Activated CD4-positive, alpha-beta T cell treated with anti-CD3 and anti-CD28 coated beads, Interleukin-2, amount 10 ng/mL, durations not matched to agents 24 days and 14 days (primary cell): ENCODE measurements at regions of chr2 and their contacts with region 1.

Region 1: DNA sequence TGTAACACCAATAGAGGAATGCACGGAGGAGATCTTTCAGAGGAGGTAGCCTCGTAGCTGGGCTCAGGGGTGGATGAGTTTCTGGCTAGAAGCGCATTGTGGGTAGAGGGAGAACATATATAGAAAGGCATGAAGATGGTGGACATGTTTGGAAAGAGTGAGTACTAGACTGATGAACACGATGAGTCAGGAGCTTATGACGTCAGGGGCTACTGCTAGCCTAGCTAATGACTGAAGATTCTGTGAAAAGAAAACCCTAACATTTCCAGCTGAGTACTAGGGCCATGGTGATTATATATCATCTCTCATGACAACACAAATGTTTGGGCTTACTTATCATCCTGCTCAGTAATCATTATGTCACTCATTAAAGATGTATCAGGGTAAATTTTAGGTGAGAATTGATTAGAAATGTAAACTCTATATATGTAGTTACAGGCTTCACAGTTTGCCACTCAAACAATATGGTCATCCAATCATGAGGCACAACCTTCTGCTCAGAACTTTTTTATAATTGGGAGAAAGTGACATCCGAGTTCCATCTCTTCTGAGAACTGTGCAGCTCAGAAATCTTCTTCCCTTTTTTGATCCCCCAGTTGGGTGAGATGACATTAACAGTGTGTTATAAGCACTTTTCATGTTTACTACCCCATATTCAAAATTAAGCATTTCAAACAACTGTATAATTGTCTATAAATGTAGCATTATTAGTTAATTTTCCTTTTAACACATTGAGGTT is 22.2 kb upstream of the IL1RN start:
- DNase-seq: peak; percentile 69
- H3K4me3 Mint-ChIP-seq: no peak overlapping the region
- H3K27ac Mint-ChIP-seq: peak overlapping the region; percentile 96
- H3K4me1 Mint-ChIP-seq: peaks cover 45% of the 10 kb centered on the region
- H3K27me3 Mint-ChIP-seq: peaks cover 3% of the 10 kb centered on the region

Region 2: GRCh38 chr2:112811841-112812306 is 293.3 kb before region 1 on chr2:
- intact Hi-C with region 1: no loop called
- DNase-seq: no peak
- H3K4me3 Mint-ChIP-seq: peak overlapping the region; percentile 27
- H3K27ac Mint-ChIP-seq: peak overlapping the region; percentile 60
- H3K4me1 Mint-ChIP-seq: peaks cover 28% of the 10 kb centered on the region
- H3K27me3 Mint-ChIP-seq: no peaks in the 10 kb centered on the region

Region 3: GRCh38 chr2:112916145-112916571 is 189.1 kb before region 1 on chr2:
- intact Hi-C with region 1: loop called (anchors 5 kb)
- DNase-seq: peak; percentile 62
- H3K4me3 Mint-ChIP-seq: peak overlapping the region; percentile 58
- H3K27ac Mint-ChIP-seq: peak overlapping the region; percentile 85
- H3K4me1 Mint-ChIP-seq: peaks cover 32% of the 10 kb centered on the region
- H3K27me3 Mint-ChIP-seq: no peaks in the 10 kb centered on the region

Region 4: GRCh38 chr2:113080134-113080533 is 25.1 kb before region 1 on chr2:
- intact Hi-C with region 1: loop called (anchors 1 kb)
- DNase-seq: peak; percentile 88
- H3K4me3 Mint-ChIP-seq: no peak overlapping the region
- H3K27ac Mint-ChIP-seq: no peak overlapping the region
- H3K4me1 Mint-ChIP-seq: peaks cover 29% of the 10 kb centered on the region
- H3K27me3 Mint-ChIP-seq: peaks cover 15% of the 10 kb centered on the region

Region 5: GRCh38 chr2:113116100-113116958 is 11.1 kb after region 1 on chr2:
- intact Hi-C with region 1: loop called (anchors 1 kb)
- DNase-seq: peak; percentile 71
- H3K4me3 Mint-ChIP-seq: peak overlapping the region; percentile 36
- H3K27ac Mint-ChIP-seq: peak overlapping the region; percentile 71
- H3K4me1 Mint-ChIP-seq: peaks cover 20% of the 10 kb centered on the region
- H3K27me3 Mint-ChIP-seq: peaks cover 2% of the 10 kb centered on the region

Region 6: DNA sequence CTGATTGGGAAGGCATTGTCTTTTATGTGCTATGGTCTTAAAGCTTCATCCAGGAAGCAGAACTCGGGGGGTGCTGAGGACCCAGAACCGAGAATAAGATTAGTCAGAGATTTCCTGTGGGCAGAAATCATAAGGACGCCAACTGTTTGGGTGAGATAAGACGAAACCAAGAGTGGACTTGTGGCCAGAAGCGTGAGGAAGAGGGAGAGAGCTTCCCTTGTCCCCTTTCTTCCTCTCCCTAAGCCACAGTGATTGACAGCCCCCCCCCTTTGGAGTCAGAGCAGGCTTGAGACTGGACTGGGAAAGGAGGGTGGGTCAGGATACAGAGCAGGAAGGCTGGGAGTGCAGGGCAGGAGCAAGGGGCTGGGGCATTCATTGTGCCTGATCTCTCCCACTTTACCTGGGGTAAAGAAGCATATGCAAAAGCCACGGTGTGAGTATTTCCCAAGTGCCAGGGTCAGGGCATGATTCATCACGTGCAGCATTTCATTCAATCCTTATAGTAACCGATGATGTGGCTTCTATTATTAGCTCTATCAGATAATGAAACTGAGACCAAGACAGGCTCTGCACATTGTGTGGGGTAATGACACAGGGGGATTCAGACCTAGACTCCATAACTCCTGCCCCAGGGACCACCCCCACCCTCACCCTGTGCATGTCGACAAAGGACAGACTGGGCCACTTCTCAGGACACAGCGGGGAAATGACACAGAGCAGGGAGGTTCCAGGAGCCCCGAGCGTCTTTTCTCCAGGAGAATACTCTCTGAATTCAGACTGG is 19.2 kb after region 1 on chr2:
- intact Hi-C with region 1: loop called (anchors 2 kb)
- DNase-seq: no peak
- H3K4me3 Mint-ChIP-seq: peak overlapping the region; percentile 27
- H3K27ac Mint-ChIP-seq: no peak overlapping the region
- H3K4me1 Mint-ChIP-seq: peaks cover 44% of the 10 kb centered on the region
- H3K27me3 Mint-ChIP-seq: peaks cover 2% of the 10 kb centered on the region

Region 7: GRCh38 chr2:113173542-113174395 is 68.6 kb after region 1 on chr2 and contains the start of gene PSD4:
- intact Hi-C with region 1: loop called (anchors 5 kb)
- DNase-seq: peak; percentile 96
- H3K4me3 Mint-ChIP-seq: peak within 1 kb of the TSS; percentile 88
- H3K27ac Mint-ChIP-seq: peak within 1 kb of the TSS; percentile 92
- H3K4me1 Mint-ChIP-seq: peaks cover 66% of the 10 kb centered on the region
- H3K27me3 Mint-ChIP-seq: no peaks in the 10 kb centered on the region
- total RNA-seq, gene PSD4: 268 and 278 TPM in 2 replicates